ENCODE measurements at regions of chr21 and their contacts with region 1.

Region 1: GRCh38 chr21:33641336-33642026 is at the start of gene CRYZL1:
- DNase-seq: peak; percentile 100
- H3K4me3 ChIP-seq: peak within 1 kb of the TSS; percentile 83 to 97
- H3K27ac ChIP-seq: peak within 1 kb of the TSS; percentile 88
- H3K4me1 ChIP-seq: no peaks in the 10 kb centered on the region
- H3K27me3 ChIP-seq: no peaks in the 10 kb centered on the region
- CTCF ChIP-seq: no peak
- POLR2A ChIP-seq: peak; percentile 88
- total RNA-seq, gene CRYZL1: 22.3 to 28.9 TPM

Region 2: DNA sequence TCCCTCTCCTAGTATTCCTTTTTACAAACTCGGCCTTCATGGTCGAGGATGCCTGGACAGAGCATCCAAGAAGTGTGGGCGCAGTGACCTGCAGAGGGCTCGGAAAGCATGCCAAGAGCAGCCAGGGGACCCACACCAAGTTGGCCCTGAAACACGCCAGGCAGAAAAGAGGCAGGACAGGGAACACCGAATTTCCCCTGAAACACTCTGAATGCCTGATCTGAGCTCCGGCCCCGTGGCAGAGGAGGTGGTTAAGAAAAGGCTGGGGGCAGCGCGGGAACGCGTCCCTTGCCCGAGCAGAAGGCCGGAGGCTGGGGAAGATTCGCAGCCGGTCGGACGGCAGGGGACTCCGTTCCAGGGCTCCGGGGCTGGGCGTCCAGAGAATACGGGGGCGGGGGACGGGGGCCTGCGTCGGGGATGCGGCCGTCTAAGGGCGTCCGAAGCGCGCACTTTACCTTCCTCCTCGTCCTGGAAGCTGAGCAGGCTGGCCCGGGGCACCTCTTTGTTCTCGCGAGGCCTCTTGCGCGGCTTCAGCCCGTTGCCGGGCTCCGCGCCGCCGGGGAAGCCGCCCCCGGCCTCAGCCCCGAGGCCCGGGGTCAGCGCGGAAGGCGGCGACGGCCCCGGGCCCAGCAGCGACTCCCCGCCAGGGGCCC is 870.5 kb before region 1 on chr21:
- intact Hi-C with region 1: loop called (anchors 5 kb)
- DNase-seq: peak; percentile 30
- H3K4me3 ChIP-seq: peak overlapping the region; percentile 88 to 92
- H3K27ac ChIP-seq: peak overlapping the region; percentile 82 to 87
- H3K4me1 ChIP-seq: no peaks in the 10 kb centered on the region
- H3K27me3 ChIP-seq: no peaks in the 10 kb centered on the region
- CTCF ChIP-seq: no peak
- POLR2A ChIP-seq: no peak

Region 3: GRCh38 chr21:33825915-33826314 is 184.4 kb after region 1 on chr21:
- intact Hi-C with region 1: loop called (anchors 10 kb)
- DNase-seq: no peak
- H3K4me3 ChIP-seq: no peak overlapping the region
- H3K27ac ChIP-seq: peak overlapping the region in 1 of 2 donors; percentile 5
- H3K4me1 ChIP-seq: no peaks in the 10 kb centered on the region
- H3K27me3 ChIP-seq: no peaks in the 10 kb centered on the region
- CTCF ChIP-seq: no peak
- POLR2A ChIP-seq: no peak

Region 4: GRCh38 chr21:33854604-33855003 is 213.1 kb after region 1 on chr21:
- intact Hi-C with region 1: no loop called
- DNase-seq: no peak
- H3K4me3 ChIP-seq: no peak overlapping the region
- H3K27ac ChIP-seq: no peak overlapping the region
- H3K4me1 ChIP-seq: no peaks in the 10 kb centered on the region
- H3K27me3 ChIP-seq: no peaks in the 10 kb centered on the region
- CTCF ChIP-seq: no peak
- POLR2A ChIP-seq: no peak

Region 5: DNA sequence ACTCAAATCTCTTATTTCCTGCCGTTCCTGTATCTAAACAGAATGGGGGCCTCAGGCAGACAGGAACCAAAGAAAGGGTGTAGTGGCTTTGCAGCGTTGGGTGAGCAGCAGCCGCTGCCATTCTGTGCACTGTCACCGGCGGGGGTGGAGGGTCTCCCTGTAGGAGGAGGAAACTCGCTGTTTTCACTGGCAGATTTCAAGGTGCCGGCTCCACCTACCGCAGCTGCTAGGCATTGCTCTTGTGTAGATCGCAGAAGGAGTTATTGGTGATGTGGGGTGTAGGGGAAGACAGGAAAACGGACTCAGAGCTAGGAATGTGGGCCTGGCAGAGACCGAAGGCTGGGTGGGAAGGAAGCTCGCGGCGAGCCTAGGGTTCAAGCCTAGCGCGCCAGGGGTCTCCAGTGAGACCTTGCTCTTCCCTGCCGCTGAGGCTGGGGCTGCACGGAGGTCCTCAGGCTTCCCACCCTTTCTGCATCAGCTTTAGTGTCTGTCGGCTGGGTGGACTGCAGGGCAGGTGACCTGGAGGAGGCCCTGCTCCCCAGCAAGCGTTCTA is 253.3 kb after region 1 on chr21:
- intact Hi-C with region 1: loop called (anchors 2 kb)
- DNase-seq: peak; percentile 50
- H3K4me3 ChIP-seq: peak overlapping the region in 1 of 2 donors; percentile 18
- H3K27ac ChIP-seq: no peak overlapping the region
- H3K4me1 ChIP-seq: no peaks in the 10 kb centered on the region
- H3K27me3 ChIP-seq: no peaks in the 10 kb centered on the region
- CTCF ChIP-seq: peak in 3 of 4 experiments; percentile 32 to 81 (median 67)
- POLR2A ChIP-seq: no peak

Region 6: GRCh38 chr21:34017039-34017961 is 375.8 kb after region 1 on chr21:
- intact Hi-C with region 1: no loop called
- DNase-seq: no peak
- H3K4me3 ChIP-seq: no peak overlapping the region
- H3K27ac ChIP-seq: no peak overlapping the region
- H3K4me1 ChIP-seq: no peaks in the 10 kb centered on the region
- H3K27me3 ChIP-seq: no peaks in the 10 kb centered on the region
- CTCF ChIP-seq: no peak
- POLR2A ChIP-seq: no peak